ENCODE measurements at regions of chr9 and their contacts with region 1.

Region 1: DNA sequence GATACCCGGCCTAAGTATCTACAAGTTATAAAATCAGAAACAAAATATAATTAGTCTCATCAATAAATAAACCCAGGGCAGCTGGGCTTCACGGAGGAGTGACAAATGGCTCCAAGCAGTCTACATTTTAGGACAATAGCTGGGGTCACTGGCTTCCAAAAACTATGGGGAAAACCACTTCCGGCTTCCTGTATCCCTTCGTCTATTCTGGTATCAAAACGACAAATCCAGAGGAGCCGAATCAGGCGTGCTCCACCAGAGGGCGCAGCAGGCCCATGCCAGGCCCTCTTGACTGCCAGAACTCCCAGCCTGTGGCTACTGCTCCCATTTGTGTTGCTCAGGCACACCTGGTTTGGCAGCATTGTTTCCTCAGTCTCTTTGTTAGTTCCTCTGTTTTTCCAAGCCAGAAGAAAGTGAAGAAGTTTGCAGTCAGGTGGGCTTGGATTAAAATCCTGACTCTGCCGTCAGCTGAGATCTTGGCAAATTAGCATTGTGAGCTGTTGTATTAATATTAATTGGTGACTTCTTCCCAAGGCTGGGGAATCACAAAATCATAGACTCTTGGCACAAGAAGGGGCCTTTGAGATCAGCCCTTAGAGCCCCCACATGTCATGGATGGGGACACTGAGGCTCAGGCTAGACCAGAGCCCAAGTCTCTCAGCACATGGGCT is 11.6 kb upstream of the RAB14 start:
- DNase-seq: peak; percentile 91 to 93
- ATAC-seq: peak; percentile 88 to 97 (median 96)
- H3K4me3 ChIP-seq: no peak overlapping the region
- H3K27ac ChIP-seq: peak overlapping the region in 7 of 10 donors; percentile 8 to 82 (median 63)
- H3K4me1 ChIP-seq: peaks cover 0 to 18% (median 6%) of the 10 kb centered on the region in 9 donors
- H3K27me3 ChIP-seq: no peaks in the 10 kb centered on the region
- CTCF ChIP-seq: peak; percentile 90 to 98 (median 96)

Region 2: GRCh38 chr9:121156263-121156731 is 57.0 kb before region 1 on chr9:
- intact Hi-C with region 1: no loop called
- DNase-seq: no peak
- ATAC-seq: no peak
- H3K4me3 ChIP-seq: no peak overlapping the region
- H3K27ac ChIP-seq: peak overlapping the region in 1 of 10 donors; percentile 4
- H3K4me1 ChIP-seq: peaks cover 0 to 41% (median 0%) of the 10 kb centered on the region in 9 donors
- H3K27me3 ChIP-seq: no peaks in the 10 kb centered on the region
- CTCF ChIP-seq: no peak

Region 3: DNA sequence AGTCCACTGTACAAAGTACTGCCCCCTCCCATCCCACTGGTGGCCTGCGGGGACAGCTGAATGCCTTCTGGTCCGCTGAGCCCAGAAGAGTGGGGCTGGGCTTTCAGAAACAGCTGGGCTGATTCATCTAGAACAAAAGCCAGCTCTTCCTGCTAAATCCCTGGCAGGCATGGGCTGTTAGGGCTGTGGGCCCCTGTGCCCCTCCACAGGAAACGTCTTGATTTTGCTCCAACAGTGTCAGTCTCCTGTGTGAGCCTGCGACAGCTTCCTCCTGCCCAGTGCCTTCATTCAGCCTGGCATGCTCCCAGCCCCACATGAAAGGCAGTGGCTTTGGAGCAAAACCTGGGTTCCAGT is 47.8 kb after region 1 on chr9:
- intact Hi-C with region 1: loop called in 3 of 10 experiments (anchors 5 kb)
- DNase-seq: no peak
- ATAC-seq: peak; percentile 61 to 83 (median 69)
- H3K4me3 ChIP-seq: no peak overlapping the region
- H3K27ac ChIP-seq: peak overlapping the region in 2 of 10 donors; percentile 24 to 49
- H3K4me1 ChIP-seq: peaks cover 0 to 31% (median 15%) of the 10 kb centered on the region in 9 donors
- H3K27me3 ChIP-seq: no peaks in the 10 kb centered on the region
- CTCF ChIP-seq: no peak

Region 4: DNA sequence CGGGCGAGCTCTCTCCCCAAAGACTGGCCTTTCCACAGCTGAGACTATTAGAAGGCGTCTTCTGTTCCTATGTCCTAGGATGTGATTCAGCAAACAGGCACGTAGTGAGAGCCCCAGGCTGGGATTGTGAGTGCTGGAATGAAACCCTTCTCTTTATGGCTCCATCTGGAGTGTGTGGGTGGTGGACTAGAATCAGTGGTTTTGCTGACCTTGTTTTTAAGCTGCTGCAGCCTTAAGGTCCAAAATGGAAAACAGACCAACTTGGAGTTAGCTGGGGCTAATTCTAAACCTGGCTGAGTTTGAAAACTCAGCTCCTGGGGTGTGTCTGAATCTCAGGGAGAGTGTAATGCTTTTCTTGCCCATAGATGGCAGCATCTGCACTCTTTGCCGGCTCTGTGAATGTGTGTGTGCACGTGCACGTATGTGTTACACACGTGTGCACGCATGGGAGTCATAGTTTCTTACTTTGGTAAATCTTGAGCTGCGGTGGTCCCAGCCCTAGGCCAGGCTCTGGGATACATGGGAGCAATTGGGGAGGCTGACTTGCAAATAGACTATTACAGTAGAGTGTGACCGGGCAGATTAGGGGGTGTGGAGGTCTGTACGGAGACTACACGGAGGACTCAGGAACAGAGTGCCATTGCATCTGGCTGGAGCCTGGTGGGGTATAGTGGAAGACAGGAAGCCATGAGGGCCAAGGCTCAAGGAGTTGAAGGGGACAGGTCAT is 65.4 kb after region 1 on chr9:
- intact Hi-C with region 1: loop called in 2 of 10 experiments (anchors 5 kb)
- DNase-seq: peak in 1 of 2 donors; percentile 83
- ATAC-seq: peak; percentile 55 to 68 (median 62)
- H3K4me3 ChIP-seq: peak overlapping the region in 2 of 10 donors; percentile 1 to 8
- H3K27ac ChIP-seq: peak overlapping the region; percentile 4 to 100 (median 98)
- H3K4me1 ChIP-seq: peaks cover 40 to 94% (median 75%) of the 10 kb centered on the region in 9 donors
- H3K27me3 ChIP-seq: no peaks in the 10 kb centered on the region
- CTCF ChIP-seq: peak; percentile 74 to 93 (median 83)

Region 5: DNA sequence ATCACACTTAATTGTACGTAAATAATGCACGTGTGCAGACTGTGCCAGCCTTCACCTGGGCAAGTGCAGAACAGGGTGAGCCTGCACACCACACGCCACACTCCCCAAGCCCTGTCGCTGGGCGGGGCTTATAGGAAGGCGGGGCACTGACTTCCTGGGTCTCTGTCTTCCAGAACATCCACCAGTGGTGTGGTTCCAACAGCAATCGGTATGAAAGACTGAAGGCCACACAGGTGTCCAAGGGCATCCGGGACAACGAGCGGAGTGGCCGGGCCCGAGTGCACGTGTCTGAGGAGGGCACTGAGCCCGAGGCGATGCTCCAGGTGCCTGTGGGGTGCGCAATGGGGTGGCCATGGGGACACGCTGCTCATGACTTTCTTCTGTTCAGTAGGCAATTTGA is 98.9 kb after region 1 on chr9:
- intact Hi-C with region 1: loop called in 4 of 10 experiments (anchors 5 to 10 kb)
- DNase-seq: no peak
- ATAC-seq: no peak
- H3K4me3 ChIP-seq: no peak overlapping the region
- H3K27ac ChIP-seq: peak overlapping the region in 1 of 10 donors; percentile 24
- H3K4me1 ChIP-seq: peaks cover 4 to 89% (median 18%) of the 10 kb centered on the region in 9 donors
- H3K27me3 ChIP-seq: no peaks in the 10 kb centered on the region
- CTCF ChIP-seq: no peak

Region 6: DNA sequence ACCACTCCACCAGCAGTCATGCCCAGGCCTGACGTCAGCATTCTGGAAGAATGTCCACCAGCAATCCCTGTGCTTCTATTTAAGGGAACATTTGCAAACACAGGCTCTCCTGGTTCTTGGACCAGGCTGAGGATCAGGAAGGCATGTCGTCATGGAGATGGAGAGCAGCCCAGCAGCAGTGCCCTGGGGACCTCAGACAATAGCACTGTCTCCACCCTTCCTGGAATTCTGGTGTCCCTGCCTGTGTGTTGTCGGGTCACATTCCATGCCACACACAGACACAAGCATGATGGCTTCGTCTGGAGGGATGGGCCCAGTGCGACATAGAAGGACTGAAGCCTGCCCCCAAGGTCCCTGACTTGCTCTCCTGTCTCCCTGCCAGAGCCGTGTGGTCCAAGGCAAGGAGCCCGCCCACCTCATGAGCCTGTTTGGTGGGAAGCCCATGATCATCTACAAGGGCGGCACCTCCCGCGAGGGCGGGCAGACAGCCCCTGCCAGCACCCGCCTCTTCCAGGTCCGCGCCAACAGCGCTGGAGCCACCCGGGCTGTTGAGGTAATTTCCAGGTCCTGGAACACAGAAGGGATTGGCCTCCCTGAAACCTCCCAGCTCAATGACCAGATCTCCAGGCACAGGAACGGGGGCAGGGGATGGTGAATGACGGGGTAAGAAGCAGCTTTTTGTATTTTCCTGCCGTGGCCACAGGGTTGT is 113.0 kb after region 1 on chr9:
- intact Hi-C with region 1: loop called in 1 of 10 experiments (anchors 5 kb)
- DNase-seq: peak; percentile 86 to 94
- ATAC-seq: peak; percentile 90 to 95 (median 92)
- H3K4me3 ChIP-seq: peak overlapping the region in 3 of 10 donors; percentile 2 to 31 (median 24)
- H3K27ac ChIP-seq: peak overlapping the region; percentile 85 to 98 (median 92)
- H3K4me1 ChIP-seq: peaks cover 32 to 96% (median 53%) of the 10 kb centered on the region in 9 donors
- H3K27me3 ChIP-seq: no peaks in the 10 kb centered on the region
- CTCF ChIP-seq: no peak

Region 7: DNA sequence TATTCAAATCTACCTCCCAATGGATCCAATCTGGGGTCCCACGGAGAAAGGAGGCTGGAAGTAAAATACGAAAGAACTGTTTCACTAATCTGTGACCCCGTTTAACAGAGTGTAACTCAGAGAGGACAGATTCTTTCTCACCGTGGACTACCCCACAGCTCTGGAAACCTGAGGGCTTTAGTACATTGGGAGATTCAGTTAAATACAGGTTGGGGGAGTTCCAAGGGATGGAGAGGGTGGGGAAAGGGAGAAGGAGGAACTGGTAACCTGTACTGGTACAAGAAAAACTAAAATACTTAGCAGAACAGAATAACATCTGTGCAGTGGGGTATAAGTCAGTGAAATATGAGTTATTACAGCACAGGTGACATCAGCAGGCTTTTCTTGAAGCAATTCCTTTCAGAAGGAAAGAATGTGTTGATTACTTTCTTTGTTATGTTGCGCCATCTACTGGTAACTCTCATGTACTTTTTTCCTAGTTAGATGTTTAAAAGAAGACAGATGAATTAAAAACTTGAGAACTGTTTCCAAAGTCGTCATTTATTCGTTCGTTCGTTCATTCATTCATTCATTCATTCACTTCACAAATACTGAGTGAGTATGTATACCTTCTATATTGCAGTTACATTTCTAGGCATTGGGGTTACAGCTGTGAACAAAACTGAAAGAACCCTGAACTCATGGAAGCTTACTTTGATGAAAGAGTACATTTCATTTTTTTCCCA is 186.8 kb after region 1 on chr9:
- intact Hi-C with region 1: loop called (anchors 1 to 5 kb)
- DNase-seq: peak in 1 of 2 donors; percentile 19
- ATAC-seq: peak in 5 of 8 donors; percentile 46 to 68 (median 64)
- H3K4me3 ChIP-seq: no peak overlapping the region
- H3K27ac ChIP-seq: no peak overlapping the region
- H3K4me1 ChIP-seq: peaks cover 0 to 6% (median 0%) of the 10 kb centered on the region in 9 donors
- H3K27me3 ChIP-seq: no peaks in the 10 kb centered on the region
- CTCF ChIP-seq: peak; percentile 60 to 80 (median 72)